Esophagus muscularis mucosa (tissue), 4 donors: ENCODE measurements at regions of chr1 and their contacts with region 1.

Region 1: GRCh38 chr1:212994926-212995325 is 20.7 kb downstream of the ANGEL2 start:
- DNase-seq: no peak
- H3K4me3 ChIP-seq: no peak overlapping the region
- H3K27ac ChIP-seq: peak overlapping the region in 1 of 4 donors; percentile 7
- H3K4me1 ChIP-seq: peaks cover 0 to 8% (median 2%) of the 10 kb centered on the region in 4 donors
- H3K27me3 ChIP-seq: no peaks in the 10 kb centered on the region
- CTCF ChIP-seq: no peak
- EP300 ChIP-seq: no peak
- POLR2A ChIP-seq: no peak

Region 2: GRCh38 chr1:212814537-212815334 is 180.2 kb before region 1 on chr1:
- intact Hi-C with region 1: loop called (anchors 2 kb)
- DNase-seq: no peak
- H3K4me3 ChIP-seq: no peak overlapping the region
- H3K27ac ChIP-seq: no peak overlapping the region
- H3K4me1 ChIP-seq: no peaks in the 10 kb centered on the region
- H3K27me3 ChIP-seq: no peaks in the 10 kb centered on the region
- CTCF ChIP-seq: peak; percentile 22 to 47 (median 38)
- EP300 ChIP-seq: no peak
- POLR2A ChIP-seq: no peak

Region 3: DNA sequence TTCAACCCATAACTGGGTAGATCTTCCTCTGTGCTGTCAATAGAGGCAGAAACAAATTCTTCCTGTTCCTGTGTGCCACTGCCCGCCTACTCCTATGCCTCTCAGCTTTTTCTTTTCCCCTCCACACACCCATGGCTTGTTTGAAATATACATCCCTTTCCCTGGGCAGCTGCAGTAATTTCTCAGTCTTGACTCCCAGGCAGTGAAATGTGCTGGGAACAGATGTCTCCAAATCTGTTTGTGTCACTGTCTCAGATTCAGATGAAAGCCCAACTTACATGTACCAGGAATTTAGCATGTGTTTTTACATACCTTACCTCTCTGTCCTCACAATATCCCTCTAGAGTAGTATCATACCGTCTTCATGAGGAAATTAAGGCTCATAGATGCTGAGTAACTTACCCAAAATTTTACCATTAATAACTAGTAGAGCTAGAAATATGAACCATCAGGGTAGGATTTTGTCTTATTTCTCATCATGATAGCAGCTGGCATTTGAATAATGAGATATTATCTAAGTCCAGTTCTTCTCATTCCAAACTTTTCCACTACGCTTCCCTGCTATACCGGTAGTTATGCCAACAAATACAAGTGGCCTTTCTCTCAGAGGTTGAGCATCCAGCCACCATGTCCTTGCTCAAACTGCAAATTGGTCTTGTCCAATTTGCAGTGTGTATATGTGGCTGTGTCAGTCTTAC is 49.3 kb before region 1 on chr1:
- intact Hi-C with region 1: loop called (anchors 5 kb)
- DNase-seq: no peak
- H3K4me3 ChIP-seq: no peak overlapping the region
- H3K27ac ChIP-seq: no peak overlapping the region
- H3K4me1 ChIP-seq: peaks cover 4 to 23% (median 17%) of the 10 kb centered on the region in 4 donors
- H3K27me3 ChIP-seq: peaks cover 0 to 6% (median 0%) of the 10 kb centered on the region in 4 donors
- CTCF ChIP-seq: no peak
- EP300 ChIP-seq: no peak
- POLR2A ChIP-seq: no peak

Region 4: GRCh38 chr1:213135572-213135971 is 140.6 kb after region 1 on chr1:
- intact Hi-C with region 1: no loop called
- DNase-seq: no peak
- H3K4me3 ChIP-seq: no peak overlapping the region
- H3K27ac ChIP-seq: no peak overlapping the region
- H3K4me1 ChIP-seq: peaks cover 0 to 10% (median 0%) of the 10 kb centered on the region in 4 donors
- H3K27me3 ChIP-seq: no peaks in the 10 kb centered on the region
- CTCF ChIP-seq: no peak
- EP300 ChIP-seq: no peak
- POLR2A ChIP-seq: no peak